ENCODE measurements at regions of chr3 and their contacts with region 1.

Region 1: DNA sequence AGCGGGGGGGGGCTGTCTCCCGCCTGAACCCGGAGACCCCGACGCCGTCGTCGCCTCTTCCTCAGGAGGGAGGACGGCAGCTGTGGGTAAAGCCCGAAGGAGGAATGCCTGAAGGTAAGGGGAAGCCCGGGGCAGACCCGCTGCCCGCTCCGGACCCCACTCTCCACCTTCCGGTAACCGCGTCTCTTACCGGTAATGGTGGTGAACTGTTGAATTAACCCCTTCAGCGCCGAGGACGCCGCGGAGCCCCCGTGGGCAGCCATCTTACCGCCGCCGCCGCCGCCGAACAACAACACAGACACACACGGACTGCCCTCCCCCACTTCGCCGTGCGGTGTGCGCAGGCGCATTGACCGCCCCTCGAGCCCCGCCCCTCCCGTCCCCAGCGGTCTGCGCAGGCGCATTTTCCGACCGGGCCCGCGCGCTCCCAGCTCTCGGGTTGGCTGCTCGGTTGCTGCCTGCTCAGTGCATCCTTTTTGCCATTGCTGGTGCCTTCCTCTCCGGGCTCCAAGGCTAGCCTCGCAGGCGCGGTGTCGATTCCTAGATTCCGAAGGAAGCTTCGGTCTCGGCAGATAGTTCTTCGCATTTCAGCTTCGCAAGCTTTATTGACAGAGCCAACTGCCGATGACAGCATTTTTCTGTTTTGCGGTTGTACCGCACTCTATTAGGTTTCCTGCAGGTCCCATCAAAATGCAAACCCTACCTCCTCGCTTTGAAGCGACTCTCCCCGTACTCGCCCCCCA is at the start of gene UBXN7:
- DNase-seq: peak; percentile 87 to 99 (median 95)
- ATAC-seq: peak; percentile 88 to 89 (median 88)
- H3K4me3 ChIP-seq: peak within 1 kb of the TSS; percentile 89 to 100
- H3K4me3 Mint-ChIP-seq: peak within 1 kb of the TSS; percentile 73 to 86 (median 81)
- H3K27ac ChIP-seq: peak within 1 kb of the TSS; percentile 80
- H3K27ac Mint-ChIP-seq: peak within 1 kb of the TSS; percentile 57 to 95
- H3K4me1 ChIP-seq: peaks cover 11 to 18% of the 10 kb centered on the region in 2 experiments
- H3K4me1 Mint-ChIP-seq: peaks cover 29 to 32% (median 29%) of the 10 kb centered on the region in 3 donors
- H3K27me3 ChIP-seq: no peaks in the 10 kb centered on the region
- H3K27me3 Mint-ChIP-seq: no peaks in the 10 kb centered on the region
- total RNA-seq, gene UBXN7: 64.7 to 92.3 (median 74.8) TPM

Region 2: DNA sequence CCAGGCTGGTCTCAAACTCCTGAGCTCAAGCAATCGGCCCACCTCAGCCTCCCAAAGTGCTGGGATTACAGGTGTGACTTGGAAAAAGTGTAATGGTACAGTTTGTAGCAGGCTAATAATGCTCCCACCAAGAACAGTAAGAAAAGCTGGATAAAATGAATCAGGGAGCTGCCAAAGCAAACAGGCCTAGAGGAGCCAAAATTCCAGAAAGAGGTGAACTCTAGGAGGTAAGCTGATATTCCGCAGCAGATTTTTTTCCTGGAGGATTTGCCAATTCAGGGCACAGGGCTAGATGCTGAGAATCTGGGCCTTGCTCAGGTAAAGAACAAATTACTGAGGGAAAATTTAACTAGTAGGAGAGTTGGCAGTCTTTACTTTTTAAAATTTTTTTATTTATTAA is 133.8 kb before region 1 on chr3:
- CTCF ChIA-PET with region 1: interaction called in 1 of 2 experiments, 11 read pairs
- POLR2A ChIA-PET with region 1: no interaction called
- DNase-seq: no peak
- ATAC-seq: no peak
- H3K4me3 ChIP-seq: no peak overlapping the region
- H3K4me3 Mint-ChIP-seq: no peak overlapping the region
- H3K27ac ChIP-seq: no peak overlapping the region
- H3K27ac Mint-ChIP-seq: no peak overlapping the region
- H3K4me1 ChIP-seq: no peaks in the 10 kb centered on the region
- H3K4me1 Mint-ChIP-seq: peaks cover 0 to 3% (median 0%) of the 10 kb centered on the region in 3 donors
- H3K27me3 ChIP-seq: no peaks in the 10 kb centered on the region
- H3K27me3 Mint-ChIP-seq: no peaks in the 10 kb centered on the region